Mammary epithelial cell (primary cell): ENCODE measurements at regions of chr14 and their contacts with region 1.

Region 1: GRCh38 chr14:80202888-80203562 is 8.3 kb downstream of the DIO2 start:
- DNase-seq: no peak
- H3K4me3 ChIP-seq: no peak overlapping the region
- H3K27ac ChIP-seq: no peak overlapping the region
- H3K4me1 ChIP-seq: no peaks in the 10 kb centered on the region
- H3K27me3 ChIP-seq: no peaks in the 10 kb centered on the region
- CTCF ChIP-seq: peak; percentile 47 to 49

Region 2: GRCh38 chr14:80105487-80105994 is 97.5 kb before region 1 on chr14:
- CTCF ChIA-PET with region 1: no interaction called
- dilution Hi-C with region 1: loop called (anchors 5 kb)
- in situ Hi-C with region 1: no loop called
- intact Hi-C with region 1: no loop called
- DNase-seq: no peak
- H3K4me3 ChIP-seq: no peak overlapping the region
- H3K27ac ChIP-seq: no peak overlapping the region
- H3K4me1 ChIP-seq: no peaks in the 10 kb centered on the region
- H3K27me3 ChIP-seq: no peaks in the 10 kb centered on the region
- CTCF ChIP-seq: no peak

Region 3: GRCh38 chr14:80117876-80118275 is 85.1 kb before region 1 on chr14:
- CTCF ChIA-PET with region 1: no interaction called
- dilution Hi-C with region 1: no loop called
- in situ Hi-C with region 1: no loop called
- intact Hi-C with region 1: no loop called
- DNase-seq: no peak
- H3K4me3 ChIP-seq: no peak overlapping the region
- H3K27ac ChIP-seq: no peak overlapping the region
- H3K4me1 ChIP-seq: no peaks in the 10 kb centered on the region
- H3K27me3 ChIP-seq: no peaks in the 10 kb centered on the region
- CTCF ChIP-seq: no peak

Region 4: GRCh38 chr14:80269353-80269925 is 66.4 kb after region 1 on chr14:
- CTCF ChIA-PET with region 1: no interaction called
- dilution Hi-C with region 1: no loop called
- in situ Hi-C with region 1: no loop called
- intact Hi-C with region 1: no loop called
- DNase-seq: peak; percentile 38
- H3K4me3 ChIP-seq: no peak overlapping the region
- H3K27ac ChIP-seq: no peak overlapping the region
- H3K4me1 ChIP-seq: no peaks in the 10 kb centered on the region
- H3K27me3 ChIP-seq: no peaks in the 10 kb centered on the region
- CTCF ChIP-seq: no peak

Region 5: DNA sequence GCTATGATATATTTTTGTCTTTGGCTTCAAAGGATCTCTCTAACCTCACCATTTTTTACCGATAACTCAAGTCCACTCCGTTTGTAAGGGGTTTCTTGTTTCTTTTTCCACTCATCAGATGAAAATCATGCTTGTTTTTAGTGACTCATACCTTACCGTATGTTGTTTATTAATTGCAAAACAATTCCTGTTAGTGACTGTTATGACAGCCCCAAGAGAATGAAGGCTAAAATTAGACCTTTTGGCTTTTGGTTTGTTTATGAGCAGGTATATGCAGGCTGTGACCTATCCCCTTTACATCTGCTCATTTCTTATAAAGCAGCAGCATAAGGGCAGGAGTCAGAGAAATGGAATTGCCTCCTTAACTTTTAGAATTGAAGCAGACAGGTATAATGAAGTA is 418.7 kb after region 1 on chr14:
- CTCF ChIA-PET with region 1: no interaction called
- dilution Hi-C with region 1: no loop called
- in situ Hi-C with region 1: no loop called
- intact Hi-C with region 1: no loop called
- DNase-seq: peak; percentile 68
- H3K4me3 ChIP-seq: no peak overlapping the region
- H3K27ac ChIP-seq: no peak overlapping the region
- H3K4me1 ChIP-seq: peaks cover 6% of the 10 kb centered on the region
- H3K27me3 ChIP-seq: no peaks in the 10 kb centered on the region
- CTCF ChIP-seq: no peak